PC-3 (cell line): ENCODE measurements at regions of chr12 and their contacts with region 1.

Region 1: GRCh38 chr12:17778242-17778641 is 311.8 kb downstream of the RERGL start:
- DNase-seq: peak; percentile 27
- ATAC-seq: peak; percentile 72
- H3K4me3 ChIP-seq: no peak overlapping the region
- H3K27ac ChIP-seq: no peak overlapping the region
- H3K4me1 ChIP-seq: 0 out of 2 replicates have a peak, but pooled peaks cover 6% of the 10 kb centered on the region
- H3K27me3 ChIP-seq: no peaks in the 10 kb centered on the region
- CTCF ChIP-seq: no peak

Region 2: DNA sequence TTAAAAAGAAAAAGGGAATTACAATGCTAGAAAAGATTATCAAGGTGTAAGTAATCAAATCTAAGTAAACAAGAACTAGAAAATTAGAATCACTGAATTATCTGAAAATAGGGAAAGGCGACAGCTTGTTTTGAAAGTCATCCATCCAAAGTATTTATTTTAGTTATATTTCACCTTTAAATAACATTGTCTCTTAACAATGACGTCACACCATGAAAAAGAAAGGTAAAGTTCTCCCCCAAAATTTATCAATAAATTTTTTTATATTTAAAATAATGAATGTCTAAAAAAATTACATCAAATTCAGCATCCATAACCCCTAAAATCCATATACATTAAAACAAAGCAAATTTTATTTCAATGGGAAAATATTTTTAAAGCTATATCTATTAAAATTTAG is 88.6 kb after region 1 on chr12:
- CTCF ChIA-PET with region 1: no interaction called
- POLR2A ChIA-PET with region 1: no interaction called
- intact Hi-C with region 1: loop called (anchors 5 kb)
- DNase-seq: no peak
- ATAC-seq: no peak
- H3K4me3 ChIP-seq: no peak overlapping the region
- H3K27ac ChIP-seq: no peak overlapping the region
- H3K4me1 ChIP-seq: no peaks in the 10 kb centered on the region
- H3K27me3 ChIP-seq: no peaks in the 10 kb centered on the region
- CTCF ChIP-seq: no peak

Region 3: DNA sequence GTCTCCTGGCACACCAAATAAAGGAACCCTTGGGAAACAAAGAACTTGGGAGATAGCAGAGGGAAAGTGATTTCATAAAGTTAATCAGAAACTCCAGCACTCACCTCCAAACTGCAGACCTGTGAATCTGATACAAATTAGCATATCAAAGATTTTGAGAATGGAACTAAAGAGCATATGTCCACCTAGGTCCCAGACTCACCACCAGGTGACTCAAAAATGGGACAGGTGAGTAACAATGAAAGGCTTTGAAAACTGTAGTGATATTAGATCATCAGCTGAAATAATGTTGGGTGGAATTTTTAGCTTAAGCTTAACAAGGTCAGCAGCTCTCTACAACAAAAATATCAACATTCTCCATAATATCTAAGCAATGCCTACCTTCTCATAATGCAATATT is 97.0 kb after region 1 on chr12:
- CTCF ChIA-PET with region 1: no interaction called
- POLR2A ChIA-PET with region 1: no interaction called
- intact Hi-C with region 1: loop called (anchors 5 kb)
- DNase-seq: no peak
- ATAC-seq: no peak
- H3K4me3 ChIP-seq: no peak overlapping the region
- H3K27ac ChIP-seq: no peak overlapping the region
- H3K4me1 ChIP-seq: no peaks in the 10 kb centered on the region
- H3K27me3 ChIP-seq: no peaks in the 10 kb centered on the region
- CTCF ChIP-seq: no peak